Prostate gland (tissue), 2 donors: ENCODE measurements at regions of chr2 and their contacts with region 1.

Region 1: GRCh38 chr2:174039551-174040416 is 74.6 kb upstream of the SP3 start:
- DNase-seq: peak; percentile 85
- H3K4me3 ChIP-seq: no peak overlapping the region
- H3K27ac ChIP-seq: peak overlapping the region; percentile 45 to 73
- H3K4me1 ChIP-seq: no peaks in the 10 kb centered on the region
- H3K27me3 ChIP-seq: no peaks in the 10 kb centered on the region
- CTCF ChIP-seq: peak; percentile 67 to 91 (median 86)
- POLR2A ChIP-seq: peak; percentile 14

Region 2: GRCh38 chr2:173571021-173571882 is 468.5 kb before region 1 on chr2:
- intact Hi-C with region 1: loop called (anchors 10 kb)
- DNase-seq: peak; percentile 68
- H3K4me3 ChIP-seq: peak overlapping the region in 1 of 2 donors; percentile 10
- H3K27ac ChIP-seq: peak overlapping the region; percentile 64 to 68
- H3K4me1 ChIP-seq: no peaks in the 10 kb centered on the region
- H3K27me3 ChIP-seq: no peaks in the 10 kb centered on the region
- CTCF ChIP-seq: peak in 3 of 4 experiments; percentile 50 to 55 (median 51)
- POLR2A ChIP-seq: no peak

Region 3: DNA sequence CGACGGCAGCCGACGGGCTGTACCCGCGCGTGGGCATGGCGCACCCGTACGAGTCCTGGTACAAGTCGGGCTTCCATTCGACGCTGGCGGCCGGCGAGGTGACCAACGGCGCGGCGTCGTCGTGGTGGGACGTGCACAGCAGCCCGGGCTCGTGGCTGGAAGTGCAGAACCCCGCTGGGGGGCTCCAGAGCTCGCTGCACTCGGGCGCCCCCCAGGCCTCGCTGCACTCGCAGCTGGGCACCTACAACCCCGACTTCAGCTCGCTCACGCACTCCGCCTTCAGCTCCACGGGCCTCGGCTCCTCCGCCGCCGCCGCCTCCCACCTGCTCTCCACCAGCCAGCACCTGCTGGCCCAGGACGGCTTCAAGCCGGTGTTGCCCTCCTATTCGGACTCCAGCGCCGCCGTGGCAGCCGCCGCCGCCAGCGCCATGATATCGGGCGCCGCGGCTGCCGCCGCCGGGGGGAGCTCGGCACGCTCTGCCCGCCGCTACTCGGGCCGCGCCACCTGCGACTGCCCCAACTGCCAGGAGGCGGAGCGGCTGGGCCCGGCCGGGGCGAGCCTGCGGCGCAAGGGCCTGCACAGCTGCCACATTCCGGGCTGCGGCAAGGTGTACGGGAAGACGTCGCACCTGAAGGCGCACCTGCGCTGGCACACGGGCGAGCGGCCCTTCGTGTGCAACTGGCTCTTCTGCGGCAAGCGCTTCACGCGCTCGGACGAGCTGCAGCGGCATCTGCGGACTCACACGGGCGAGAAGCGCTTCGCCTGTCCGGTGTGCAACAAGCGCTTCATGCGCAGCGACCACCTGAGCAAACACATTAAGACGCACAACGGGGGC is 296.9 kb after region 1 on chr2:
- intact Hi-C with region 1: no loop called
- DNase-seq: no peak
- H3K4me3 ChIP-seq: no peak overlapping the region
- H3K27ac ChIP-seq: no peak overlapping the region
- H3K4me1 ChIP-seq: no peaks in the 10 kb centered on the region
- H3K27me3 ChIP-seq: peaks cover 78% of the 10 kb centered on the region
- CTCF ChIP-seq: peak in 1 of 4 experiments; percentile 38
- POLR2A ChIP-seq: no peak